ENCODE measurements at regions of chr5 and their contacts with region 1.

Region 1: GRCh38 chr5:131079232-131079631 is 85.8 kb downstream of the HINT1 start:
- DNase-seq: no peak
- ATAC-seq: no peak
- H3K4me3 Mint-ChIP-seq: no peak overlapping the region
- H3K27ac Mint-ChIP-seq: no peak overlapping the region
- H3K4me1 Mint-ChIP-seq: peaks cover 14% of the 10 kb centered on the region
- H3K27me3 Mint-ChIP-seq: no peaks in the 10 kb centered on the region

Region 2: DNA sequence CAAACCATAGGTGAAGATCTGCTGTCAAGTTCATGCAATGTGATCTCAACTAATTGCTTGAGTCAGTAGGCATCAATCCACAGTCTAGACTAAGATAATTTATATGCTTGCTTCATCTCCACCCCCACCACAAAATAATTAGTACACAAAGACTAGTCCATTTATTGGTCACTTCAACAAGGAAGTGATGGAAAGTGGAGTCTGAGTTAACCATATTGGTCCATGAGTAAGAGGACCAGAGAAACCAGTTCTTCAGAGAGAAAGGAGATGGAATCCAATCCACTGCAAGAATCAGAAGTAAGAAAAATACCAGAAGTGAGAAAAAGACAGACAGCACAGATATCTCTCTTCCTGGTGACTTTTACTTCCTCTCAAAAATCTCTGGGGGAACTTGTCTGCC is 808.4 kb before region 1 on chr5:
- CTCF ChIA-PET with region 1: no interaction called
- POLR2A ChIA-PET with region 1: no interaction called
- intact Hi-C with region 1: no loop called
- DNase-seq: no peak
- ATAC-seq: no peak
- H3K4me3 Mint-ChIP-seq: no peak overlapping the region
- H3K27ac Mint-ChIP-seq: no peak overlapping the region
- H3K4me1 Mint-ChIP-seq: no peaks in the 10 kb centered on the region
- H3K27me3 Mint-ChIP-seq: peaks cover 7% of the 10 kb centered on the region

Region 3: DNA sequence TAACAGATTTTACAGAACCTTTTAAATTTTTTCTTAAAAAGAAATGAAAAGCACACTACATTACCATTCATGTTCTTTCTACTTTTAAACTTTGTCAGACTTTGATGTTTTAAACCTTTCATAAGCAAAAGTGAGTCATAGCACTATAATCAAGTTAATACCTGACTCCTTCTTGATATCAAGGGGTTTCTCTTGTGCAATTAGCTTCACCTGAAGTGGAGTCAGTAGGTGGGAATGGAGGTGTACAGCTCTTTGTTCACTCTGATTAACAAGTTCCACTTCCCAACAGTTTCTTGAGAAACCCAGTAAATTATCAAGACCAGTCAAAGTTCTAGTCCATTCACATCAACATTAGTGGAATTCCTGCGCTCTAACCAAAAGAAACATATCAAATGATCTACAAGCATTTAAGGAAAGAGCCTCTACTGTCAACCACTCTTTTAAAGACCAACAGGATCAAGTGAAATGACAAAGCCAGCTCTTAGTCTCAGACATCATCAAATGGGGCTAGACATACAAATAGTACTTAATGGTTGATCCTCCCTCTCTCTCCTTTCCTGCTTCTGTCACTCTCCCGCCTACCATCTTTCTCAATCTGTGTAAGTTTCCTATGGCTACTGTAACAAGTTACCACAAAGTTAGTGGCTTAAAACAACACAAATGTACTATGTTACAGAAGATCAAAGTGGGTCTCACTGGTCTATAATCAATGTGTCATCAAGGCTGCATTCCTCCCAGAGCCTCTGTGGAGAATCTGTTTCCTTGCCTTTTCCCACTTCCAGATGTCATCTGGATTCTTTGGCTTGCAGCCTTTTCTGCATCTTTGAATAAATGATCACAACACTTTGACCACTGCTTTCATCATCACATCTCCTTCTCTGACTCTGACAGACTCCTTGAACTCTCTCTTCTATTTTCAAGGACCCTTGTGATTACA is 17.8 kb after region 1 on chr5:
- CTCF ChIA-PET with region 1: no interaction called
- POLR2A ChIA-PET with region 1: no interaction called
- intact Hi-C with region 1: loop called in 1 of 2 experiments (anchors 1 kb)
- DNase-seq: no peak
- ATAC-seq: peak; percentile 88
- H3K4me3 Mint-ChIP-seq: no peak overlapping the region
- H3K27ac Mint-ChIP-seq: peak overlapping the region; percentile 44
- H3K4me1 Mint-ChIP-seq: peaks cover 17% of the 10 kb centered on the region
- H3K27me3 Mint-ChIP-seq: no peaks in the 10 kb centered on the region

Region 4: GRCh38 chr5:131563434-131564228 is 484.4 kb after region 1 on chr5:
- CTCF ChIA-PET with region 1: no interaction called
- POLR2A ChIA-PET with region 1: no interaction called
- intact Hi-C with region 1: no loop called
- DNase-seq: no peak
- ATAC-seq: no peak
- H3K4me3 Mint-ChIP-seq: no peak overlapping the region
- H3K27ac Mint-ChIP-seq: no peak overlapping the region
- H3K4me1 Mint-ChIP-seq: peaks cover 37% of the 10 kb centered on the region
- H3K27me3 Mint-ChIP-seq: no peaks in the 10 kb centered on the region

Region 5: DNA sequence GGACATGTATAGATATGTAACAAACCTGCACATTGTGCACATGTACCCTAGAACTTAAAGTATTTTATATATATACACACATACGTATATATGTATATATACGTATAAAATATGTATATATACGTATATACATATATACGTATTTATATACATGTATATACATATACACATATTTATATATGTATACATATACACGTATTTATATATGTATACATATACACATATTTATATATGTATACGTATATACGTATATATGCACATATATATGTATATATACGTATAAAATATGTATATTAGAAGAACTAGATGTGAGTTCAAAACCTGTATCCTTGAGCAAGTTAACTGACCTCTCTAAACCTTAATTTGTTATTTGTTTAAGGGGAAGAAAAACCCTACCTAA is 656.2 kb after region 1 on chr5:
- CTCF ChIA-PET with region 1: no interaction called
- POLR2A ChIA-PET with region 1: no interaction called
- intact Hi-C with region 1: no loop called
- DNase-seq: no peak
- ATAC-seq: no peak
- H3K4me3 Mint-ChIP-seq: no peak overlapping the region
- H3K27ac Mint-ChIP-seq: no peak overlapping the region
- H3K4me1 Mint-ChIP-seq: no peaks in the 10 kb centered on the region
- H3K27me3 Mint-ChIP-seq: no peaks in the 10 kb centered on the region

Measured in activated CD4-positive, alpha-beta T cell treated with anti-CD3 and anti-CD28 coated beads for 36 hours (primary cell).